Heart left ventricle (tissue), 16 donors: ENCODE measurements at regions of chr22 and their contacts with region 1.

Region 1: GRCh38 chr22:24951942-24952836 is at the start of gene KIAA1671:
- DNase-seq: peak; percentile 88 to 94 (median 89)
- ATAC-seq: peak; percentile 87 to 98 (median 96)
- H3K4me3 ChIP-seq: peak within 1 kb of the TSS; percentile 43 to 97 (median 78)
- H3K27ac ChIP-seq: peak within 1 kb of the TSS; percentile 72 to 88 (median 79)
- H3K4me1 ChIP-seq: peaks cover 0 to 41% (median 12%) of the 10 kb centered on the region in 12 donors
- H3K27me3 ChIP-seq: peaks cover 0 to 15% (median 0%) of the 10 kb centered on the region in 9 donors
- CTCF ChIP-seq: peak; percentile 96 to 100 (median 98)
- POLR2A ChIP-seq: peak in 1 of 2 donors; percentile 56
- total RNA-seq, gene KIAA1671: 7.2 to 22.1 (median 14.8) TPM

Region 2: GRCh38 chr22:24985826-24986214 is 33.6 kb after region 1 on chr22:
- intact Hi-C with region 1: loop called in 2 of 10 experiments (anchors 5 kb)
- DNase-seq: peak in 4 of 5 donors; percentile 41 to 74 (median 63)
- ATAC-seq: peak; percentile 59 to 91 (median 82)
- H3K4me3 ChIP-seq: peak overlapping the region in 4 of 12 donors; percentile 5 to 12 (median 11)
- H3K27ac ChIP-seq: peak overlapping the region; percentile 43 to 84 (median 76)
- H3K4me1 ChIP-seq: peaks cover 6 to 89% (median 58%) of the 10 kb centered on the region in 12 donors
- H3K27me3 ChIP-seq: no peaks in the 10 kb centered on the region
- CTCF ChIP-seq: no peak
- POLR2A ChIP-seq: no peak

Region 3: GRCh38 chr22:25027959-25028840 is 76.0 kb after region 1 on chr22:
- intact Hi-C with region 1: loop called (anchors 1 to 5 kb)
- DNase-seq: peak in 4 of 5 donors; percentile 34 to 53 (median 44)
- ATAC-seq: peak; percentile 7 to 53 (median 32)
- H3K4me3 ChIP-seq: no peak overlapping the region
- H3K27ac ChIP-seq: peak overlapping the region in 7 of 12 donors; percentile 12 to 72 (median 52)
- H3K4me1 ChIP-seq: peaks cover 0 to 53% (median 33%) of the 10 kb centered on the region in 12 donors
- H3K27me3 ChIP-seq: no peaks in the 10 kb centered on the region
- CTCF ChIP-seq: peak; percentile 15 to 61 (median 47)
- POLR2A ChIP-seq: no peak

Region 4: GRCh38 chr22:25048659-25049647 is 96.8 kb after region 1 on chr22:
- intact Hi-C with region 1: loop called (anchors 1 to 2 kb)
- DNase-seq: peak in 4 of 5 donors; percentile 57 to 77 (median 66)
- ATAC-seq: peak; percentile 46 to 84 (median 79)
- H3K4me3 ChIP-seq: no peak overlapping the region
- H3K27ac ChIP-seq: no peak overlapping the region
- H3K4me1 ChIP-seq: peaks cover 0 to 33% (median 3%) of the 10 kb centered on the region in 12 donors
- H3K27me3 ChIP-seq: no peaks in the 10 kb centered on the region
- CTCF ChIP-seq: peak; percentile 75 to 96 (median 90)
- POLR2A ChIP-seq: no peak